Prostate gland (tissue), 2 donors: ENCODE measurements at regions of chr9 and their contacts with region 1.

Region 1: GRCh38 chr9:128094166-128094967 is 26.3 kb downstream of the SLC25A25 start:
- DNase-seq: peak; percentile 94
- H3K4me3 ChIP-seq: peak overlapping the region; percentile 1 to 9
- H3K27ac ChIP-seq: peak overlapping the region; percentile 86 to 92
- H3K4me1 ChIP-seq: peaks cover 26% of the 10 kb centered on the region
- H3K27me3 ChIP-seq: no peaks in the 10 kb centered on the region
- CTCF ChIP-seq: no peak
- POLR2A ChIP-seq: peak; percentile 89

Region 2: DNA sequence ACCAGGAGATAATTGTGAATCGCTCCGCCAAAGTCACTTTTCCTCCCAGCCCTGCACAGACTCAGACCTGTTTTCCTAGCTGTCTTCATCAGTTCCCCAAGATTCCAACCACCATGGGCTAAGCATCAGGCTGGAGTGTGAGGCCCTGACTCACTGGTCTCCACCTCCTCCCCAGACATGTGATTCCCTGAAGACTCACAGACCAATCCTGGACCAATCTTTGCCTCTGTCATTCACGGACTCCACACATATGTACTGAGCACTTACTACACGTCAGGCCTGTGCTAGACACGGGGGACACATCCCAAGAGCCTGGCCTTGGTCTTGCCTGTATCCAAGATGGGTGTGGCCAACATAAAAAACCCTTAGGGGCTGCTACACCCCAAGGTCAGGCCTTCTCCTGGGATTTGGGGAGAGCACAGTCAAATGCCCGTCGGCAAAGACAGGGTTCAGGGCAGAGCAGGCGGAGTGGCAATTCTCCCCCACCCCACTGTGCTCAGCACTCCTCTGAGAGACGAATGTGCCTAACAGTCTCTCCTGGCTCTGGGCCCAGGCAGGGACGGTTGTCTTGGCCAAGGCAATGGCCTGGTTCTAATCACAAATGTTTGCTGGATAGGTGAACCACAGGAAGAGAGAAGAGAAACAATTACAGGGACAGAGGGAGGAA is 125.5 kb before region 1 on chr9:
- intact Hi-C with region 1: loop called (anchors 10 kb)
- DNase-seq: peak; percentile 83
- H3K4me3 ChIP-seq: no peak overlapping the region
- H3K27ac ChIP-seq: peak overlapping the region; percentile 90 to 92
- H3K4me1 ChIP-seq: peaks cover 83% of the 10 kb centered on the region
- H3K27me3 ChIP-seq: no peaks in the 10 kb centered on the region
- CTCF ChIP-seq: peak in 1 of 4 experiments; percentile 7
- POLR2A ChIP-seq: no peak

Region 3: DNA sequence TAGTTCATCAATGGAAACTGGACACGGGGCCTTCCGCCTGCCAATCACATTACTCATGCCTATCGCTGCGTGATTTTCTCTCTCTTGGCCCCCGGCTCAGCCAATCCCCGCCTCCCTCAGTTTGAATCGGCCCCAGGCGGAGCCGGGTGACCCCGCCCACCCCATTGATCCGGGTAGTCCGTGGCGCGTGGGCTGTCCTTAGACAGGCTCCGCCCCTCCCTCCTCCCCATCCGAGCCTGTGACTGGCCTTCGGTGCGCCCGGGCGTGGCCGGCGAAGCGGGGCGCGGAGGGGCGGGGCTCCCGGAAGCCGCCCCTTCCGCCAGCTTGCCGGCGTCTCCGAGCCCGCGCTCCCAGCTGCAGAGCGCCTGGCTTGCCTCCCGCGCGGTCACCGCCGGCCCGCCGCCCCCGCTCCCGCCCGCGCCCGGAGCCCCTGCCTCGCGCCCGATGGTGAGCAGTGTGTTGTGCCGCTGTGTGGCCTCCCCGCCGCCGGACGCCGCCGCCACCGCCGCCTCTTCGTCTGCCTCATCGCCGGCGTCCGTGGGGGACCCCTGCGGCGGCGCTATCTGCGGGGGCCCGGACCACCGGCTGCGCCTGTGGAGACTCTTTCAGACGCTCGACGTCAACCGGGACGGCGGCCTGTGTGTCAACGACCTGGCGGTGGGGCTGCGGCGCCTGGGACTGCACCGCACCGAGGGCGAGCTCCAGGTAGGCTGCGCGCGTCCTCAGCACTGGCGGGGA is 26.3 kb before region 1 on chr9 and contains the start of gene SLC25A25:
- intact Hi-C with region 1: loop called (anchors 2 kb)
- DNase-seq: peak; percentile 100
- H3K4me3 ChIP-seq: peak within 1 kb of the TSS; percentile 92 to 97
- H3K27ac ChIP-seq: peak within 1 kb of the TSS; percentile 94 to 95
- H3K4me1 ChIP-seq: peaks cover 14% of the 10 kb centered on the region
- H3K27me3 ChIP-seq: no peaks in the 10 kb centered on the region
- CTCF ChIP-seq: peak in 2 of 4 experiments; percentile 14 to 16
- POLR2A ChIP-seq: peak; percentile 90
- total RNA-seq, gene SLC25A25: 26.0 to 33.1 TPM

Region 4: GRCh38 chr9:128191406-128192046 is 97.2 kb after region 1 on chr9 and contains the start of gene CIZ1:
- intact Hi-C with region 1: no loop called
- DNase-seq: peak; percentile 67
- H3K4me3 ChIP-seq: peak within 1 kb of the TSS; percentile 86 to 97
- H3K27ac ChIP-seq: peak within 1 kb of the TSS; percentile 83 to 86
- H3K4me1 ChIP-seq: peaks cover 11% of the 10 kb centered on the region
- H3K27me3 ChIP-seq: no peaks in the 10 kb centered on the region
- CTCF ChIP-seq: peak; percentile 68 to 90 (median 82)
- POLR2A ChIP-seq: peak; percentile 31
- total RNA-seq, gene CIZ1: 55.2 to 94.0 TPM